ENCODE measurements at regions of chr21 and their contacts with region 1.

Region 1: DNA sequence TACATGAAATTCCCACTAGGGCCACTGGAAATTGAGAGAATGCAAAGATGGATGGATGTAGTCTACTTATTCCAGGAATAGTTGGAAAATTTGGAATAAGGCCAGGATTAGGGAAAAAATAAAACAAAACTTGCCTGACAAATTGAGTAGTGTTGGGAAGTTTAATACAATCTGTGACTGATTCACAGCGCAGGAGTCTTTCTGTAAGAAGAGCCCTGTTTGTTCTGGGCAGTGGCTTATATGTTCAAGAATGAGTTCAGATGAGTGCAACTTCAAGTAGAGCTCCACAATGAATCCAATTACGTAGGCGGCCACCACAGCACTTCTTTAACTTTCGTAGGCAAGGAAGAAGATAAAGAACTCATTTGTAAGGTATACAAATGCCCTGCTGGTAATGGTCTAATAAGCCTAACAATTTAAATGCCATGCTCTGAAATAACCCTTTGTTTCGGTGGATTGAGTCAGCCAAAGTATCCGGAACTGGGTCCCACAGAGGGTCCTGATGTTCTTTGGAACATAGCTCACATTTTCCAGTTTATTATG is 47.1 kb upstream of the KCNE1 start:
- DNase-seq: no peak
- H3K4me3 ChIP-seq: no peak overlapping the region
- CTCF ChIP-seq: no peak
- POLR2A ChIP-seq: no peak

Region 2: DNA sequence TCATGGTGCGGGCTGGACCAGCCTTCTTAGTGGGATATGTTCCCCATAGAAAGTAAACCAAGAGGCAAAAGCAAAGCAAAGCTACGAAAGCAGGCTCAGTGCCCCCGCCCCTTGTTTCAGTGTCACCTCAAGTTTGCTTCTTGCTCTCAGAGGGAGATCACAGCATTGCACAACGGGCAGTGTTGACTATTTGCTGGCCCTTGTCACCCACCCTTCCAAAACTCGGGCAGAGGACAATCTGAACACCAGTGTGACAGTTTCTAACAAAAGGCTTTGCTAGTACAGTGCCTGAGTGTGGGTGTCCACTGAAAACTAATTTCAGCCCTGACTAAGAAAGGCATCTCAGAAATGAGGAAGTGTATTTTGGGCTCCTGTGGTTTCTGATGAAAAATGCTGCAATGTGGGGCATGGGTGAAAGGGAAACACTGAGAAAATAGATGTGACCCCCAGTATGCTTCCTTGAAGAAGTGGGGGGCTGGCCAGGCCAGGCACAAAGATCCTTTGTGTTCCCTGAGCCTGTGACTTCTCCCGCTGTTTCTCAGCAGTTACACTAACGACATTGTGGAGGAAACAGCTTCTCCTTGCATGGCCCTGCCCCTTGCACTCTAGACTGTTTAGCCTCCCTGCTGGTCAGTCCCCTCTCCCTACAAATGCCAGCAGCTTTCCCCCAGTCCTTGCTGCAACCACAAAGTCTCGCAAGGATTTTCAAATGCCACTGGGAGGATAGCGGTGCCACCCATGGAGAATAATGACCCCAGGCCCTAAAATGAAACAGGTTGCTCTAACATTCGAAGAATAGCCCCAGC is 13.9 kb before region 1 on chr21:
- intact Hi-C with region 1: loop called (anchors 2 kb)
- DNase-seq: no peak
- H3K4me3 ChIP-seq: no peak overlapping the region
- CTCF ChIP-seq: no peak
- POLR2A ChIP-seq: no peak

Measured in lower leg skin (tissue), 4 donors.